Activated B cell treated with CpG ODN at 0.5 μM for 24 hours (primary cell): ENCODE measurements at regions of chr5 and their contacts with region 1.

Region 1: GRCh38 chr5:14234219-14234618 is 91.1 kb downstream of the TRIO start:
- DNase-seq: no peak
- ATAC-seq: no peak
- H3K4me3 Mint-ChIP-seq: no peak overlapping the region
- H3K27ac Mint-ChIP-seq: peak overlapping the region; percentile 32
- H3K4me1 Mint-ChIP-seq: peaks cover 63% of the 10 kb centered on the region
- H3K27me3 Mint-ChIP-seq: no peaks in the 10 kb centered on the region
- CTCF ChIP-seq: no peak

Region 2: GRCh38 chr5:13783726-13784125 is 450.5 kb before region 1 on chr5:
- CTCF ChIA-PET with region 1: no interaction called
- POLR2A ChIA-PET with region 1: no interaction called
- intact Hi-C with region 1: no loop called
- DNase-seq: no peak
- ATAC-seq: no peak
- H3K4me3 Mint-ChIP-seq: no peak overlapping the region
- H3K27ac Mint-ChIP-seq: no peak overlapping the region
- H3K4me1 Mint-ChIP-seq: no peaks in the 10 kb centered on the region
- H3K27me3 Mint-ChIP-seq: no peaks in the 10 kb centered on the region
- CTCF ChIP-seq: no peak

Region 3: DNA sequence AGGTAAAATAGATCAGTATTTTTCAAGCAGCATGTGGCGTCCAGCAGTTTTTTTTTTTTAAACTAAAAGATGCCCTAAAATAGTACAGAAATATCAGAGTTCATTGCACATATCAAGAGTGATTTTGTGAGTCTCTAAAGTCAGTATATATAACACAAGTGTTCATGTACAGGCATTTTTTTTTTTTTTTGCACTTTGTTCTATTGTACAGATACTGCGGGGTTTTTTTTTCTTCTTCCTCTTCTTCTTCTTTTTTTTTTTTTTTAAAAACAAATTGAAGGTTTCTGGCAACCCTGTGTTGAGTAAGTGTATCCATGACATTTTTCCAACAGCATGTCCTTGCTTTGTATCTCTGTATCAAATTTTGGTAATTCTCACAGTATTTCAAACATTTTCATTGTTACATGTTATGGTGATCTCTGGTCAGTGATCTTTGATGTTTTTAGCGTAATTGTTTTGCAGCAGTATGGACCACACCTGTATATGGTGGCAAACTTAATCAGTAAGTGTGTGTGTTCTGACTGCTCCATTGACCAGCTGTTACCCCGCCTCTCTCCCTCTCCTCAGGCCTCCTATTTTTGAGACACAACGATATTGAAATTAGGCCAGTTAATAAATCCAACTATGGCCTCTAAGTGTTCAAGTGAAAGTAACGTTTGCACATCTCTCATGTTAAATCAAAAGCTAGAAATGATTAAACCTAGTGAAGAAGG is 14.3 kb before region 1 on chr5:
- CTCF ChIA-PET with region 1: no interaction called
- POLR2A ChIA-PET with region 1: no interaction called
- intact Hi-C with region 1: loop called (anchors 1 kb)
- DNase-seq: no peak
- ATAC-seq: no peak
- H3K4me3 Mint-ChIP-seq: peak overlapping the region; percentile 44
- H3K27ac Mint-ChIP-seq: peak overlapping the region; percentile 59
- H3K4me1 Mint-ChIP-seq: peaks cover 96% of the 10 kb centered on the region
- H3K27me3 Mint-ChIP-seq: no peaks in the 10 kb centered on the region
- CTCF ChIP-seq: no peak